ENCODE measurements at regions of chr15 and their contacts with region 1.

Region 1: GRCh38 chr15:89647191-89647851 is 7.9 kb downstream of the KIF7 start:
- DNase-seq: peak; percentile 77 to 94 (median 90)
- ATAC-seq: peak; percentile 89
- H3K4me3 ChIP-seq: no peak overlapping the region
- H3K4me1 ChIP-seq: no peaks in the 10 kb centered on the region
- CTCF ChIP-seq: peak; percentile 87

Region 2: DNA sequence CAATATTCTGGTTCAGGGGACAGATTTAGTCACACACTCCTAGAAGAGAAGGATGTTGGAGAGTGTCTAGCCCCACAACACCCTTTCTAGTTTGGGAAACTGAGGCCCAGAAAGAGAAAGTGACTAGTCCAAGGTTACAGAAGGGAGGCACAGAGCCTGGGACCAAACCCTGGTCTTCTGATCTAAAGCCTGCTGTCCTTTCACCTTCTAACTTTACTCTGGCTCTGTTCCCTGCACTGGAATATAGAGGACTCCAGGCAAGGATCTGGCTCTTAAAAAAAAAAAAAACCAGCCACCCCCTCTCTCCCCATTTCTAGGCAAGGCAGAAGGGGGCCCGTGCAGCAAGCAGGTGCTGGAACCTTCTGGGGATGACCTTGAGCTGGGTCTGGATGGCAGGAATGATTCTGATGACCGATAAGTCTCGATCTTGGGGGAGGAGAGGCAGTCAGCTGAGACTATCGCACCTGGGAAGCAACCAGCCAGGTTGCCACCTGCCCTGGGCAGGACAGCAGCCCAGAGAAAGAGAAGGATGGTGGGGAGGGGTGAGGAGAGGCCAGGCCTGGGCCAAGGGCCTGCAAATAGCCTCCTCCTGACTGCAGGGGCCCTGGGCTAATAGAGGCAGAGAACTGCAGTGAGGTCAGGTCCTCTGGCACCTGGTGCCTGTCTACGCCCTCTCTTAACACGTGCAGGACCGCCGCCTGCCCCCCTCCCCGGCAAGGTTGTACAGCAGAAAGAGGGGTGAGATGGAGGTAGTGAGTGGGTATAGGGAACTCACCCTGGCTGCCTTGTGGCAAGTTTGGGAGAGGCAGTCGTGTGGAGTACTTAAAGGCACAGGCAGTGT is 120.5 kb before region 1 on chr15:
- intact Hi-C with region 1: no loop called
- DNase-seq: no peak
- ATAC-seq: no peak
- H3K4me3 ChIP-seq: no peak overlapping the region
- H3K4me1 ChIP-seq: no peaks in the 10 kb centered on the region
- CTCF ChIP-seq: no peak

Region 3: DNA sequence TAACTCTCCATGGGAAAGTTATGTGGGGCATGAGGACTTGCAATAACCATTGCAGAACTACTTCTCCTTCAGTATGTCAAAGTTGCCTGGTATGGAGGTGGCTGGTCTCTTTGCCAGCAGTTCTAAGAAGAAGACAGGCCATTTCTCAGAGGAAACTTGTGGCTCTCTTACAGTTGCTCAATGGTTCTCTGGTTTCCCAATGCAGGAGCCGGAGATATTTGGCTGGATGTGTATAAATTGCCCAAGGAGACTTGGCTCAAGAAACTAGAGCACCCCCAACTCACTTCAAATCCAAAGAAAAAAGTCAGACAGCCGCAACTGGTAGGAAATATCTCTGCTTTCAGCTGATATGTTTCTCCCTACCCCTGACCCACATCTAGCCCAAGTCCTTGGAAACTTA is 67.5 kb after region 1 on chr15:
- intact Hi-C with region 1: no loop called
- DNase-seq: no peak
- ATAC-seq: no peak
- H3K4me3 ChIP-seq: no peak overlapping the region
- H3K4me1 ChIP-seq: no peaks in the 10 kb centered on the region
- CTCF ChIP-seq: no peak

Region 4: DNA sequence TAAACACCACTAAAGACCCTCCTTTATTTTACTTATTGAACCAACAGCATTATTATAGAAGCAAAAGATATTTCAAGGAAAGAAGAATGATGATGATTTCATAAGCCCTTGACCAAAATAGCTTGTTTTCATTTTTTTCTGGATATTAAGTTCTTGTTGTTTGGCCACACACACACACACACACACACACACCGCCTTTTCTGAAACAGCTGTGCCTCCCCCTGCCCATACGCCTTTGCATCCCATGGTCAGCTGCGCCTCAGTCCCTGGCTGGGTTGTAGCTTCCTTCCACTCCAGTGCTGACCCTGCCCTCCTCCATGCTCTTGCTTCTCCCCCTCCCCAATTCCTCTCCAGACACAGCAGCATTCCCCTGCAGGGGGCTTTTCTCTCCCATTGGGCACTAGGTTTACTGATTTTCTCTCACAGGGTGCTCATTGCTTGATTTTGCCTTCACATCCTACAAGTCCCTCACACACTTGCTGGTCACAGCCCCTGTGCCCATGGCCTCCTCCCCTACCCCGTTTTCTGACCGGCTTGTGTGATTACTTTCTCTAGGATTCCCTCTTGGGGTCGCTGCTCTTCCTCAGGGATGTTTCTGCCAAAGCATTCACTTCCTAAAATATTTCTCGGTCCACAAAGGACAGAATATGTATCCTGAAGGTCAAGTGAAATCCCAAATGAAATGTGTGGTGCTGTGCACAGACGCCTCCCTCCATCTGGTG is 85.3 kb after region 1 on chr15:
- intact Hi-C with region 1: loop called in 1 of 2 experiments (anchors 10 kb)
- DNase-seq: no peak
- ATAC-seq: no peak
- H3K4me3 ChIP-seq: no peak overlapping the region
- H3K4me1 ChIP-seq: no peaks in the 10 kb centered on the region
- CTCF ChIP-seq: no peak